CD4-positive, alpha-beta T cell (primary cell): ENCODE measurements at regions of chr12 and their contacts with region 1.

Region 1: GRCh38 chr12:118372541-118373495 is at the start of gene TAOK3:
- DNase-seq: peak; percentile 94 to 99 (median 96)
- ATAC-seq: peak; percentile 84
- H3K4me3 ChIP-seq: peak within 1 kb of the TSS; percentile 86
- H3K4me3 Mint-ChIP-seq: peak within 1 kb of the TSS; percentile 100
- H3K27ac ChIP-seq: peak within 1 kb of the TSS; percentile 46 to 71
- H3K27ac Mint-ChIP-seq: peak within 1 kb of the TSS; percentile 100
- H3K4me1 ChIP-seq: peaks cover 49% of the 10 kb centered on the region
- H3K4me1 Mint-ChIP-seq: peaks cover 61% of the 10 kb centered on the region
- H3K27me3 ChIP-seq: no peaks in the 10 kb centered on the region
- H3K27me3 Mint-ChIP-seq: no peaks in the 10 kb centered on the region
- CTCF ChIP-seq: no peak
- total RNA-seq, gene TAOK3: 53.5 to 56.6 TPM

Region 2: DNA sequence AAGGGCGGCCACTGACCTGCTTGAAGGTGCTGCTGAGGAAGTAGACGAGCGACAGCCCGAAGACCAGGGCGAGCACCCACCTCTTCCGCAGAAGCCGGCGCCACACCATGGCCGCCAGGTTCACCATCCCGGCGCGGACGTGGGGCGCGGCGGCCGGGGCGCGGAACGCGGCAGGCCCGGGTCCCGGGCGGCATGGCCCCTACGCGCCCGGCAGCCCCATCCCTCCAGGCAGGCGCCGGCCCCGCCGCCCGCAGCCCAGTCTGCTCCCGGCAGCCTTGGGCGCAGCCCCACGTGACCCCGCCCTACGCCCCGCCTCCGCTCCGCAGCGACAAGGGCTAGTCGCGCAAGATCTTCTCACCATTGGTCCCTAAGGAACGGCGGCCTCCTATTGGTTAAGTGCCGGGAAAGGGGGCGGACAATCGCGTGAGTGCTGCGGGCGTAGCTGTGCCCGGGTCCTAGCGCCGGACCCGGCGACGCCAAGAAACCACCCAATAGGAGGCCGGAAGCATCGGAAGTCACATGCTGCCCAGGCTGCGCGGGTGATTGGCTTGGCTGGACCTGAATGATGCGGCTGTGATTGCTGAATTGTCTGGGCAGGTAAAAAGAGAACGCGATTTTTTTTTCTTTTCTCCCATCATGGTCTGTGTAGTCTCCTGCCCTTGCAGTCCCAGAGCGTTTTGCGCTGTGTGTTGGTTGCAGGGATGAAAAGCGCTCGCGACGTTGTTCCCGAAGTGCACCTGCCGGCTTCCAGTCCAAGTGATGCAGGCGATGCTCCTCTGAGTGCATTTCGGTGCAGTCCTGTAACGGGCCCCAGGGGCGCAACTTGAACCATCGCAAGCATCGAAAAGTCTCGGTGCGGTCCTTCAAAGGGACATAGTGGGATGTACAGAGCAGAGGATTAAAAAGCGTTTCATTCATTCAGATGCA is 1634.8 kb before region 1 on chr12 and contains the starts of genes RNFT2 and SPRING1:
- CTCF ChIA-PET with region 1: no interaction called
- POLR2A ChIA-PET with region 1: no interaction called
- intact Hi-C with region 1: loop called in 1 of 2 experiments (anchors 5 kb)
- DNase-seq: peak; percentile 96 to 100 (median 98)
- ATAC-seq: peak; percentile 96
- H3K4me3 ChIP-seq: peak within 1 kb of the TSS; percentile 87
- H3K4me3 Mint-ChIP-seq: peak within 1 kb of the TSS; percentile 96
- H3K27ac ChIP-seq: peak within 1 kb of the TSS; percentile 27 to 39
- H3K27ac Mint-ChIP-seq: peak within 1 kb of the TSS; percentile 86
- H3K4me1 ChIP-seq: peaks cover 27% of the 10 kb centered on the region
- H3K4me1 Mint-ChIP-seq: peaks cover 35% of the 10 kb centered on the region
- H3K27me3 ChIP-seq: no peaks in the 10 kb centered on the region
- H3K27me3 Mint-ChIP-seq: no peaks in the 10 kb centered on the region
- CTCF ChIP-seq: no peak
- total RNA-seq, gene RNFT2: 4.9 to 6.0 TPM
- total RNA-seq, gene SPRING1: 7.6 to 7.8 TPM

Region 3: GRCh38 chr12:117874842-117875434 is 497.9 kb before region 1 on chr12:
- CTCF ChIA-PET with region 1: no interaction called
- POLR2A ChIA-PET with region 1: no interaction called
- intact Hi-C with region 1: loop called in 1 of 2 experiments (anchors 5 kb)
- DNase-seq: peak; percentile 41 to 76 (median 51)
- ATAC-seq: peak; percentile 59
- H3K4me3 ChIP-seq: no peak overlapping the region
- H3K4me3 Mint-ChIP-seq: no peak overlapping the region
- H3K27ac ChIP-seq: peak overlapping the region in 1 of 2 donors; percentile 35
- H3K27ac Mint-ChIP-seq: peak overlapping the region; percentile 43
- H3K4me1 ChIP-seq: peaks cover 16% of the 10 kb centered on the region
- H3K4me1 Mint-ChIP-seq: peaks cover 6% of the 10 kb centered on the region
- H3K27me3 ChIP-seq: peaks cover 7 to 14% of the 10 kb centered on the region in 2 experiments
- H3K27me3 Mint-ChIP-seq: peaks cover 30% of the 10 kb centered on the region
- CTCF ChIP-seq: peak; percentile 80

Region 4: DNA sequence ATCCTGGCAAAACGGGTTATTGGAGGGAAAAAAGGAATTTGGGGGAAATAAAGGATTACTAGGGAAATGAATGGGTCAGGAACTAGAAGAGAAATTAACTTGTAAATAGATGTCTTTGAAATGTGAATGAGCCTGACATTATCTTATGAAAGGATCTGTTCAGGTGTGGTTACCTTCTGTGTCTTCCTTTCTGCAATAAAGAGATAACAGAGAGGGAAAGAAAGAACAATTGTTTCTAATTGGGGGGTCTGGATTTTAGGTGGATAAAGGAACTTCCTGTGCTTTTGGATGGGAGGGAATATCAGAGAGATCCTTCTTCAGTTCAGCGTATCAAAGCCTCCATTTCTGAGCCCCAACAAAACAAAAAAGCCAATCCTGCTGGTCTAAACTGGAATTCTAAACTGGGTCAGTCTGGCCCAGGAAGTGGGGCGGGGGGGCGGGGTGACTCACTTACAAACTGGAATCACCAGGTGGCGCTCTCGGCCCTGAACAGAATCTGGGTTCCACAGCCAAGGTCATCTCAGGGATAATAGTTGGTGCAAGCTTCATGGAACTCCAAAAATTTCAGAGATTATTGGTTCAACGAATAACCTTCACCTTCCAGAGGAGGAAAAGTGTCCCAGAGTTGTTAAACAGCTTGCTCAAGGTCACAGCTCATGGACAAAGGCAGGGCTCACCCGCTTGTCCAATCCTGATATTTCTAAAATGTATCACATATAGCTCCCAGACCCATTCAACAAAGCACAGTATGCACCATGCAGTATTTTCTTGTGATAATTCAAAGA is 252.0 kb before region 1 on chr12:
- CTCF ChIA-PET with region 1: interaction called, 4 read pairs
- POLR2A ChIA-PET with region 1: interaction called, 4 read pairs
- intact Hi-C with region 1: loop called (anchors 2 to 5 kb)
- DNase-seq: peak; percentile 35 to 81 (median 54)
- ATAC-seq: peak; percentile 67
- H3K4me3 ChIP-seq: no peak overlapping the region
- H3K4me3 Mint-ChIP-seq: no peak overlapping the region
- H3K27ac ChIP-seq: peak overlapping the region in 1 of 2 donors; percentile 6
- H3K27ac Mint-ChIP-seq: peak overlapping the region; percentile 62
- H3K4me1 ChIP-seq: peaks cover 6% of the 10 kb centered on the region
- H3K4me1 Mint-ChIP-seq: peaks cover 11% of the 10 kb centered on the region
- H3K27me3 ChIP-seq: no peaks in the 10 kb centered on the region
- H3K27me3 Mint-ChIP-seq: no peaks in the 10 kb centered on the region
- CTCF ChIP-seq: peak; percentile 82

Region 5: GRCh38 chr12:118299791-118300460 is 72.9 kb before region 1 on chr12:
- CTCF ChIA-PET with region 1: interaction called, 4 read pairs
- POLR2A ChIA-PET with region 1: no interaction called
- intact Hi-C with region 1: loop called (anchors 5 to 10 kb)
- DNase-seq: no peak
- ATAC-seq: no peak
- H3K4me3 ChIP-seq: no peak overlapping the region
- H3K4me3 Mint-ChIP-seq: no peak overlapping the region
- H3K27ac ChIP-seq: no peak overlapping the region
- H3K27ac Mint-ChIP-seq: no peak overlapping the region
- H3K4me1 ChIP-seq: no peaks in the 10 kb centered on the region
- H3K4me1 Mint-ChIP-seq: peaks cover 43% of the 10 kb centered on the region
- H3K27me3 ChIP-seq: no peaks in the 10 kb centered on the region
- H3K27me3 Mint-ChIP-seq: no peaks in the 10 kb centered on the region
- CTCF ChIP-seq: no peak

Region 6: DNA sequence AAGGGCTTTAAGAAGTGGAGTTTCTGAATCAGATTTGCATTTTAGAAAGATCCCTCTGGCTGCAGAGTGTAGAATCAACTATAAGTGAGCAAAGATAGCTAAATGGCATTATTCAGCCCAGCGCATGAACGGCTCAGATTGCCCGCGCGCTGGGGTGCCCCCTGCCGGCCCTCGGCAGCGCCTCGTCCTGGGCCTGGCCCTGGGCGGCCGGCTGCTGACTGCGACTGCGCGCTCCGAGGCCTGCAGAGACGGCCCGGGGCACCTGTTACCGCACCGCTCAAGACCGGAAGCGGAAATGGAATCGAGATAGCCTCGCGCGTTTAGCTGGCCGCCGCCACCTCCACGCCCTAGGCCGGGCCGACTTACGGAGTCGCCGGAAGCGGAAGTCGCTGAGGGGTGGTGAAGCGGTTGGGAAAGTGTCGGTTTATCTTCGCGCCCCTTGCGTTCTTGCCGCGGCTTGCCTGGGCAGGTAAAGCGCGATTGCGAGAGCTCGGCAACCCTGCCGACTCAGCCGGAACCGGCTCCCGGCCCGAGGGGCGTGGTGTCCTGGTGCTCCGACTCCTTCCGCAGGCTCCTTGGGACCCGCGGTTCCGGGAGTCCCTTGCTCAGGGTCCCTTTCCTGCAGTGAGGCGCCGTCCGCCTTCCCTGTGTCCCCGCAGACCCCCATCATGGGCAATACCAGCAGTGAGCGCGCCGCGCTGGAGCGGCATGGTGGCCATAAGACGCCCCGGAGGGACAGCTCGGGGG is 1294.9 kb after region 1 on chr12 and contains the start of gene PRKAB1:
- CTCF ChIA-PET with region 1: no interaction called
- POLR2A ChIA-PET with region 1: interaction called, 5 read pairs
- intact Hi-C with region 1: loop called in 1 of 2 experiments (anchors 10 kb)
- DNase-seq: peak; percentile 87 to 99 (median 94)
- ATAC-seq: peak; percentile 88
- H3K4me3 ChIP-seq: peak within 1 kb of the TSS; percentile 90
- H3K4me3 Mint-ChIP-seq: peak within 1 kb of the TSS; percentile 92
- H3K27ac ChIP-seq: peak within 1 kb of the TSS; percentile 80 to 91
- H3K27ac Mint-ChIP-seq: peak within 1 kb of the TSS; percentile 93
- H3K4me1 ChIP-seq: peaks cover 24% of the 10 kb centered on the region
- H3K4me1 Mint-ChIP-seq: peaks cover 57% of the 10 kb centered on the region
- H3K27me3 ChIP-seq: no peaks in the 10 kb centered on the region
- H3K27me3 Mint-ChIP-seq: no peaks in the 10 kb centered on the region
- CTCF ChIP-seq: peak; percentile 96
- total RNA-seq, gene PRKAB1: 18.6 to 24.2 TPM